K562 (cell line): ENCODE measurements at regions of chr5 and their contacts with region 1.

Region 1: DNA sequence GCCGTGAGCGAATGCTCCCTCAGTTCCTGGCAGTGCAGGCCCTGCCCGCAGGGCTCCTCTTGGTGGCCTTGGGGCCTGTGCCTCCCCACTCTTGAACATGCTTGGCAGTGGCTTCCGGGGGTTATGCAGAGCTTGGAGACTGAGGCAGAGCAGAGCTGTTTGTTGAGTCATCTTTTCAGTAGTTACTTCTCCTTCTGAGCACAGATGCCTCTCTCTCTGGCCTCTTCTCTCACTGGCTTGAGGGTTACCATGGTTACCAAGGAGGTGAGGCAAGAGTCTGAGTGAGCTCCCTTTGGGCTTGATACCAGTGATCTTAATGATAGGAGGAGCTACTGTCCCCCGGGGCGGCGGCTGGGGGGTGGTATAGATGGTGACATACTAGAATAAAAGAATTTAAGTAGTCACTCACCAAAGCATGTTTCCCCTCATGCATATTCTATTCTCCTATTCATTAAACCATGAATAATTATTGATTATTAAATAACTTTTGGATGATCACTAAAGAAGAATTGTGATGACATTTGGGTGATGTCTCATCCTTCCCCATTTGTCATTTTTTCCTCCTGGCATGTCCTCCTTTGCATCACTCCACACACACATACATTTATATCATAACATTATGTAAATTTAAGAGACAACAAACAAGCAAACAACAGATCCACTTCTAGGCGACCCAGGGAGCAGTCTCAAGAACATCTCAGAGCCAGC is 111.1 kb downstream of the ARHGAP26 start:
- DNase-seq: no peak
- ATAC-seq: no peak
- H3K4me3 ChIP-seq: no peak overlapping the region
- H3K27ac ChIP-seq: no peak overlapping the region
- H3K4me1 ChIP-seq: no peaks in the 10 kb centered on the region
- H3K27me3 ChIP-seq: peaks cover 3 to 5% of the 10 kb centered on the region in 2 experiments; a peak in 3 of 5 replicates
- CTCF ChIP-seq: no peak
- EP300 ChIP-seq: no peak
- POLR2A ChIP-seq: no peak
- RAD21 ChIP-seq: no peak

Region 2: GRCh38 chr5:142713121-142713706 is 168.0 kb before region 1 on chr5:
- CTCF ChIA-PET with region 1: interaction called, 25 read pairs
- POLR2A ChIA-PET with region 1: no interaction called
- in situ Hi-C with region 1: no loop called
- intact Hi-C with region 1: loop called (anchors 1 kb)
- DNase-seq: peak; percentile 78 to 87 (median 86)
- ATAC-seq: peak; percentile 99
- H3K4me3 ChIP-seq: peak overlapping the region; percentile 48
- H3K27ac ChIP-seq: no peak overlapping the region; the same call in 2 of the 3 replicates
- H3K4me1 ChIP-seq: peaks cover 0 to 4% of the 10 kb centered on the region in 2 experiments; a peak in 2 of 5 replicates
- H3K27me3 ChIP-seq: peaks cover 3 to 10% of the 10 kb centered on the region in 2 experiments; a peak in 3 of 5 replicates
- CTCF ChIP-seq: peak; percentile 80 to 95 (median 94)
- EP300 ChIP-seq: no peak
- POLR2A ChIP-seq: no peak
- RAD21 ChIP-seq: peak; percentile 67 to 70

Region 3: GRCh38 chr5:142748568-142749249 is 132.5 kb before region 1 on chr5:
- CTCF ChIA-PET with region 1: interaction called, 47 read pairs
- POLR2A ChIA-PET with region 1: no interaction called
- in situ Hi-C with region 1: no loop called
- intact Hi-C with region 1: loop called (anchors 1 kb)
- DNase-seq: peak in 3 of 4 experiments; percentile 23 to 29 (median 23)
- ATAC-seq: peak; percentile 63; the same call in 2 of the 3 replicates
- H3K4me3 ChIP-seq: no peak overlapping the region
- H3K27ac ChIP-seq: no peak overlapping the region
- H3K4me1 ChIP-seq: no peaks in the 10 kb centered on the region
- H3K27me3 ChIP-seq: no peaks in the 10 kb centered on the region
- CTCF ChIP-seq: peak; percentile 66 to 81 (median 66)
- EP300 ChIP-seq: no peak
- POLR2A ChIP-seq: no peak
- RAD21 ChIP-seq: peak; percentile 92 to 96